ENCODE measurements at regions of chr6 and their contacts with region 1.

Region 1: DNA sequence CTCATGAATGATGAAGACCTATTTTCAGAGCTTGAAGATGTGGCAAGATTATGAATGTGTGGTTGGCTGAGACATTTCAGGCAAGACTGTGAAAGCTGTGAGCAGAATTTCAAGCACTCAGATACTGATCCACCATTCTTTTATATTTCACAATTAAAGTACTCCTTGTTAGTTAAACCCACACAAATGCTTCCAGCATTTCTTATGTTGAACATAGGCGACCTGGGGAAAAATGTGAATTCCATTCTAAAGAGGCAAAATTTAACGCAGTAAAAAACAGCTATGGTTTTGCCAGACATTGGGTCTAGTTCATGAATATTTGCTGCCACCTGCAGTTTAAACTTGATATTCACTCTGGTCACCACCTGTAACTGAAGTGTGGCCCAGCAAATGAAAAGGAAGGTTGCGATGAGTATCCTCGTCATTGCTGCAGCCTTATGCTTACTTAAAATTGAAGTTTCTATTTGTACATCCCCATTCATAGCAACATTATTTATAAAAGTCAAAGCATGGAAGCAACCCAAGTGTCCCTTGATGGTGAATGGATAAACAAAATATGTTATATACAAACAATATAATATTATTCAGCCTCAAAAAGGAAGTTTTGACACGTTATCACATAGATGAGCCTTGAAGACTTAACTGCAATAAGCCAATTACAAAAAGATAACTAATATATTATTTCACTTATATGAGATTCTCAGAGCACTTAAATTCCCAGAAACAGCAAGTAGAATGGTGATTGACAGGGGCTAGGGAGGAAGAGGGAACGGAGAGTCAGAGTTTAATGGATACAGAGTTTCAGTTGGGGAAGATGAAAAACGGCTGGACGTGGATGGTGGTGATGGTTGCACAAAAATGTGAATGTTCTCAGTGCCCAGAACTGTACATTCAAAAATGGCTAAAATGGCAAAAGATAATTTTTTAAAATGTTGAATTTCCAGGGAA is 32.4 kb upstream of the FAM184A start:
- H3K4me3 Mint-ChIP-seq: no peak overlapping the region
- H3K27ac Mint-ChIP-seq: no peak overlapping the region
- H3K4me1 Mint-ChIP-seq: peaks cover 14% of the 10 kb centered on the region
- H3K27me3 Mint-ChIP-seq: no peaks in the 10 kb centered on the region

Region 2: DNA sequence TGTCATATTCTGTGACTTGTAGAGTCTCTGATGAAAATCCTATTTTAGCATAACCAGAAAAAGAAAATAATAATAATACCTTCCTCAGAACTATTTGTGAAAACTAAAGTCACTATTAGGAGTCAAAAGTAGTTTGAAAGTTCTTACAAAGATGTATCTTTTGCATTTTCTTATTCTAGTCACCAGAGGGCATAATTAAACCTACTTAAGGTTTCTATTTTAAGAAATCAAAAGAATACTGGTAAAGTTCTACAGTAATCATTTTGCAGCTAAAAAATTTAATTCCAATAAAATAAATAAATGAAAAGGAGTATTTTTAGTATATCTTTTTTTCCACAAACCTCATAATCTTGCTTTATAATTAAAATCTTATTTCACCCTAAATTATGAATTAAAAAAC is 147.9 kb before region 1 on chr6:
- intact Hi-C with region 1: loop called (anchors 1 kb)
- H3K4me3 Mint-ChIP-seq: no peak overlapping the region
- H3K27ac Mint-ChIP-seq: no peak overlapping the region
- H3K4me1 Mint-ChIP-seq: peaks cover 9% of the 10 kb centered on the region
- H3K27me3 Mint-ChIP-seq: no peaks in the 10 kb centered on the region

Measured in dendritic cell treated with granulocyte-macrophage colony-stimulating factor and Interleukin-4, amounts not matched to agents 40 ng/mL and 50 ng/mL, for 4 days (primary cell).